ENCODE measurements at regions of chr7 and their contacts with region 1.

Region 1: GRCh38 chr7:75738987-75739795 is 450 bp upstream of the HIP1 start:
- DNase-seq: peak; percentile 98
- H3K4me3 Mint-ChIP-seq: peak overlapping the region; percentile 93
- H3K27ac Mint-ChIP-seq: peak overlapping the region; percentile 96
- H3K4me1 Mint-ChIP-seq: peaks cover 21% of the 10 kb centered on the region
- H3K27me3 Mint-ChIP-seq: peaks cover 17% of the 10 kb centered on the region

Region 2: GRCh38 chr7:75531359-75531821 is 207.8 kb before region 1 on chr7:
- intact Hi-C with region 1: loop called (anchors 1 kb)
- DNase-seq: no peak
- H3K4me3 Mint-ChIP-seq: no peak overlapping the region
- H3K27ac Mint-ChIP-seq: no peak overlapping the region
- H3K4me1 Mint-ChIP-seq: peaks cover 20% of the 10 kb centered on the region
- H3K27me3 Mint-ChIP-seq: peaks cover 5% of the 10 kb centered on the region

Region 3: GRCh38 chr7:75866489-75867389 is 127.5 kb after region 1 on chr7:
- intact Hi-C with region 1: loop called (anchors 2 kb)
- DNase-seq: no peak
- H3K4me3 Mint-ChIP-seq: no peak overlapping the region
- H3K27ac Mint-ChIP-seq: no peak overlapping the region
- H3K4me1 Mint-ChIP-seq: peaks cover 24% of the 10 kb centered on the region
- H3K27me3 Mint-ChIP-seq: peaks cover 8% of the 10 kb centered on the region

Region 4: DNA sequence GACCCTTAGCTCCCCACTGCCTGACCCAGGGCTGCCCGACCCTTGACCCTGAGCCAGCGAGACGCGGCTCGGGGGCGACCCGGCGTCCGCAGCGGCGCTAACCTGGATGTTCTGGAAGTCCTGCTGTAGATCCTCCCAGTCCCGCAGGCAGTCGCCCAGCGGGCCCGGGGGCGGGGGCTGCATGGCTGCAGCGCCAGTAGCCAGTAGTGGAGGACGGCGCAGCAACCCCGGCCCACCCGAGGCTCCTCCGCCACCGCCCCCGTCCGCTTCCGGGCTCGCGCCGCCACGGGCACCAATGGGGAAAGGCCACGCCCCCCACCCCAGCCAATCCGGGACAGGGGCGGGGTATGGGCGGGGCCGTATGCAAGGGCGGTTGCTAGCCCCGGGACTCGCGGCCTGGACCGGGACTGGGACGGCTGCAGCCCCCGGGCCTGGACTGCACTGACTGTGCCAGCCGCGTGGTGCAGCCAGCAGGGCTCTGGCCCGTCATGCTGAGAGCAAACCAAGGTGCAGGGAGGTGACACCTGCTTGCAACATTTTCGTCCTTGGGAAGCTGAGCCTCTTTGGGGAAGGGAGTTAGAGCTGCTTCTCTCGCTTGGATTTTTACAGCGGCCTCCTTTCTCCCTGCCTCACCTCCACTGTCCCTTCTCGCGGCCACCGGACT is 255.3 kb after region 1 on chr7 and contains the start of gene TMEM120A:
- intact Hi-C with region 1: loop called (anchors 1 kb)
- DNase-seq: peak; percentile 93
- H3K4me3 Mint-ChIP-seq: peak within 1 kb of the TSS; percentile 84
- H3K27ac Mint-ChIP-seq: peak within 1 kb of the TSS; percentile 18
- H3K4me1 Mint-ChIP-seq: peaks cover 25% of the 10 kb centered on the region
- H3K27me3 Mint-ChIP-seq: no peaks in the 10 kb centered on the region
- total RNA-seq, gene TMEM120A: 44.3 and 49.9 TPM in 2 replicates

Region 5: DNA sequence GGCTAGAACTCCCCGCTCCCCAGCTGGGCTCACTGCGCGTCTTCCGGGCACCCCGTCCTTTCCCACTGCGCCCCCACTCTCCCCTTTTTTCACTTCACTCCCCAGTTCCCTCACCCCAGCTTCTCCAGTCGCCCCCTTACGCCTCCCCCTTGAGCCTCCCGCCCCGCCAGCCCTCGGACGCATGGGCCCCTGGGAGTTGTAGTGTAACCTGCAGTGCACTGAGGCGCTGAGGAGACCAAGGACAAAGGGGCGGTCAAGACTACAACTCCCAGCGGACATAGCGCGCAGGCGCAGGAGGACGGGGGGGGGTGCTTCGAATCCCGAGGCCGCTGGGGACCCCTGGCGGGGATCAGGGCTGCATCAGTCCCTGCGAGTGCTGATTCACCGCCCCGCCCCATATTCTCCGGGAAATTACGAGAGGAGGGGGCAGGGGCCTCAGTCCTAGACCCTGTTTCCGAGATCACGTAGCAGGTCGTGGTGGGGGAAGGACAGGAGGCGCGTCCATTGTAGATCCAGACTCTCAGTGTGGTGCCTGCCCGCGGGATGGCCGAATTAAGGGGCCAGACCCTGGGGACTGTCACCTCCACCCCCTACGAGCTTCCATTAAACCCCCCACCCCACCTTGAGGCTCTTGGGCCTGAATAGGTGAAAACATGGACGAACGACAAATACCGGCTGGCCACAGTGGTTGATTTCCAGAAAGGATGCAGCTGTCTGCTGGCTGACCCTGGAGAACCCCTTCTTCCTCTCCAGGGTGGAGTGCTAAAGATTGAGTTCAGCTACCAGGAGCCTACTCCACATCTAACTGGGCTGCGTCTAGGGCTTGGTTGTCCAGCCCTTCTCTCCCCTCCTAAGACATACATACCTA is 620.2 kb after region 1 on chr7:
- intact Hi-C with region 1: loop called (anchors 1 kb)
- DNase-seq: peak; percentile 92
- H3K4me3 Mint-ChIP-seq: peak overlapping the region; percentile 88
- H3K27ac Mint-ChIP-seq: peak overlapping the region; percentile 96
- H3K4me1 Mint-ChIP-seq: peaks cover 48% of the 10 kb centered on the region
- H3K27me3 Mint-ChIP-seq: no peaks in the 10 kb centered on the region

Measured in activated T-helper 1 cell treated with anti-CD3 and anti-CD28 coated beads, Interleukin-12 subunit alpha, Interleukin-12 subunit beta, Interleukin-2, Interleukin-4 antibody, amounts not matched to agents 30 ng/mL and 10 ng/mL and 1 ng/mL, durations not matched to agents 14 hours and 24 hours and 36 hours (primary cell).